Left cardiac atrium (tissue), 4 donors: ENCODE measurements at regions of chr15 and their contacts with region 1.

Region 1: DNA sequence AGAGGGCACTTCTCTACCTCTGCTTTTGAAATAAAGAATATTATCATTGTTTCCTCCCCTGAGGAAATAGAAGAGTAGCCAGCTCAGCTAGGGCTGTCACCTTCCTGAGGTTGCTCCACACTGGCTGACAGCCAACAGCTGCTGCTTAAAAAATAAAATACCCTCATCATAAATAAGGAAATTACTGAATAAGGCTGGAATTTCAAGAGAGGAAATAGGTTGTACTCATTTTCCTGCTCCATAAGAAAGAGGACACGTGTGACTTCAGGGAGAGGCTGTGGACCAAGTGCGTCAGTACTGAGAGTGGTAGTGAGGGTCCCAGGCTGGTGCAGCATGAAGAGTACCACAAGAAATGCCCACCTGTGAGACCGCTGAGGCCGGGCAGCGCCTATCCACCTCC is 8.1 kb upstream of the C2CD4B start:
- DNase-seq: peak; percentile 78
- ATAC-seq: peak; percentile 55 to 67

Region 2: GRCh38 chr15:61989667-61990066 is 183.5 kb before region 1 on chr15:
- intact Hi-C with region 1: no loop called
- DNase-seq: no peak
- ATAC-seq: no peak

Region 3: DNA sequence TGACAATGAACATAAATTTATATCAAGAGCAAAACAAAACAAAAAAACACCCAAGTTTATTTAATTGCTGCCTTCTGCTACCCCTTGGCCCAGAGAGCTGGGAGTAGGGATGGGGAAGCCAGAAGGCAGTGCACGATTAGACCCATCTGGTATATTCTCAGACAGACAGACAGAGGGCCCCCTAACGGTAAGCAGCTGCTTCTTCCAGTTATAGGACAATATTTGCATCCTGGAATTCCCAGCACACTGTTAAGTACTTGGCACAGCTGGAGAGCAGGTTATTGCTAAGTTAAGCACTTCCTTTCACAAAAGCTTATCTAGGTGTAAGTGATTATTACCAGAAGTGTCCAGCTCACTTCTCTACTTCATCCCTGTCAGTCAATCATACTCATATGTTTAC is 47.4 kb before region 1 on chr15:
- intact Hi-C with region 1: loop called in 1 of 2 experiments (anchors 10 kb)
- DNase-seq: no peak
- ATAC-seq: peak; percentile 79 to 84

Region 4: DNA sequence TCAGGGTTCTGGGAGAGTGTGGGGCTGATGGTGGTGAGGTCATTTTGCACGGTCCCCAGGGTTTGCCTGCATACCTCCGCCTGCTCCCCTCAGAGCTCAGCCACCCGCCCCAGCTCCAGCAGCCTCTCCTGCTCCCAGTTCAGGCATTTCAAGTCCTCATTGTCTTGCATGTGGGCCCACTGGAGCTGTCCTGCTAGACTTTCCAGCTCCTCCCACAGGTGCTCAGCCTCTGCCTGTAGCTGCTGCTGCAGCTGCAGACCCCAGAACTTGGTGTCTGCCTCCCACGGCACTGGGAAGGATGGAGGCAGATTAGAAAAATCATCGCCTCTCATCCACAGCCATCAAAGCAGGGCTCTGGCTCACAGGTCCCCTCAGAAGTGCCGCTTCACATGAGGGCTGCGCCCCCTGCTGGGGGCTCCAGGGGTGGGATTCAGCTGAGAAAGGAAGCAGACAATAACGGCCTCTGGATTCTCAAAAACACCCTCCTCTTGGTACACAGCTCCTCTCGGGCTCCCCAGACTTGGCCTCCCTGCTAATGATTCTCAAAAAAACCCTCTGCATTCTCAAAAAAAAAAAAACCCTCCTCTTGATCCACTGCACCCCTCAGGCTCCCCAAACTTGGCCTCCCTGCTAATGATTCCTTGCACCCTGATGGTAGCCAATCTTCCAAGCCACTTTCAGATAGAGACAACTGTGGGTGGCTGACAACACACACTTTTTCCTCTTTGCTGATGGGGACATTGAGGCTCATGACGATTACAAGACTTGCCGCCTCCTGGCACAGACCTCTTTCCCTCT is 81.1 kb after region 1 on chr15:
- intact Hi-C with region 1: loop called in 1 of 2 experiments (anchors 10 kb)
- DNase-seq: peak; percentile 79
- ATAC-seq: peak; percentile 70 to 78